ENCODE measurements at regions of chr16 and their contacts with region 1.

Region 1: GRCh38 chr16:82011199-82011641 is at the start of gene SDR42E1:
- DNase-seq: peak; percentile 46
- ATAC-seq: peak; percentile 97
- H3K4me3 Mint-ChIP-seq: peak within 1 kb of the TSS; percentile 83
- H3K27ac Mint-ChIP-seq: peak within 1 kb of the TSS; percentile 72
- H3K4me1 Mint-ChIP-seq: peaks cover 13% of the 10 kb centered on the region
- H3K27me3 Mint-ChIP-seq: peaks cover 10% of the 10 kb centered on the region
- CTCF ChIP-seq: no peak
- total RNA-seq, gene SDR42E1: 7.4 and 7.5 TPM in 2 replicates

Region 2: GRCh38 chr16:81956213-81956948 is 54.8 kb before region 1 on chr16:
- CTCF ChIA-PET with region 1: no interaction called
- POLR2A ChIA-PET with region 1: no interaction called
- intact Hi-C with region 1: loop called (anchors 10 kb)
- DNase-seq: no peak
- ATAC-seq: no peak
- H3K4me3 Mint-ChIP-seq: no peak overlapping the region
- H3K27ac Mint-ChIP-seq: no peak overlapping the region
- H3K4me1 Mint-ChIP-seq: no peaks in the 10 kb centered on the region
- H3K27me3 Mint-ChIP-seq: no peaks in the 10 kb centered on the region
- CTCF ChIP-seq: no peak